Activated CD4-positive, alpha-beta memory T cell treated with anti-CD3 and anti-CD28 coated beads for 36 hours (primary cell): ENCODE measurements at regions of chr11 and their contacts with region 1.

Region 1: DNA sequence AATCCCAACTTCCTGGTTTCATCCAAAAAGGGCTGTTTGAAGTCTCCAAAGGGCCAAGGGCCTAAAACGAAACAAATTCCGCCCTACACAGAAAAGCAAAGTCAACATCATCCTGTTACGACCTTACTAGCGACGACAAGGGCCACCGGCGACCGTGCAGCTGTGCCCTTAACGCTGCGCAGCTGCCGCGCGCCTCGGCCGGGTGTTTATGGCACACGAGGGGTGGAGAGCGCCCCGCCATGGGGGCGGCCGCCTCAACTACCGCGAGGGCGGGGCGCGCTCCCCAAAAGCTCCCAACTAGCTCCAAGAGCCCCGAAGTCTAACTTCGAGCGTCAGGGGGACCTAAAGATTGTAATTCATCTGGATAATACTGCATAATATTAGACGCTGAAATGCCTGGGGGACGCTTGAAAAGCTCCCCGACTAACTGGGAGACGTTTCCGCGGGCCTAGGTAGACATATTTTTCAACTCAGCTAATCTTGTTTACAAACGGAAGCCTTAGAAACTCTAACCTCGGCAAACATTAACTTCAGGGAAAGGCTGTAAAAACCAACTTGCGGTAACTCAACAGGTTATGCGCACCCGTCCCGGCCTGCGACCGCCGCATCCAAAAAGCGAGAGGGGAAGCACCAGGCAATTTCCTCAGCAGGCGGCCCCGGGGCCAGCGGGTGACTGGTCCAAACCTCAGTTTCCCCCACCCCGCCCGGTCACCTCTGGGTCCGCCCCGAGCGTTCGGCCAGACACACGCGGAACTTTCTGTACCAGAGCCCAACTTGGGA is 694 bp downstream of the TMEM123 start:
- DNase-seq: peak; percentile 86
- H3K4me3 Mint-ChIP-seq: peak overlapping the region; percentile 84
- H3K27ac Mint-ChIP-seq: peak overlapping the region; percentile 96
- H3K4me1 Mint-ChIP-seq: peaks cover 75% of the 10 kb centered on the region
- H3K27me3 Mint-ChIP-seq: no peaks in the 10 kb centered on the region

Region 2: DNA sequence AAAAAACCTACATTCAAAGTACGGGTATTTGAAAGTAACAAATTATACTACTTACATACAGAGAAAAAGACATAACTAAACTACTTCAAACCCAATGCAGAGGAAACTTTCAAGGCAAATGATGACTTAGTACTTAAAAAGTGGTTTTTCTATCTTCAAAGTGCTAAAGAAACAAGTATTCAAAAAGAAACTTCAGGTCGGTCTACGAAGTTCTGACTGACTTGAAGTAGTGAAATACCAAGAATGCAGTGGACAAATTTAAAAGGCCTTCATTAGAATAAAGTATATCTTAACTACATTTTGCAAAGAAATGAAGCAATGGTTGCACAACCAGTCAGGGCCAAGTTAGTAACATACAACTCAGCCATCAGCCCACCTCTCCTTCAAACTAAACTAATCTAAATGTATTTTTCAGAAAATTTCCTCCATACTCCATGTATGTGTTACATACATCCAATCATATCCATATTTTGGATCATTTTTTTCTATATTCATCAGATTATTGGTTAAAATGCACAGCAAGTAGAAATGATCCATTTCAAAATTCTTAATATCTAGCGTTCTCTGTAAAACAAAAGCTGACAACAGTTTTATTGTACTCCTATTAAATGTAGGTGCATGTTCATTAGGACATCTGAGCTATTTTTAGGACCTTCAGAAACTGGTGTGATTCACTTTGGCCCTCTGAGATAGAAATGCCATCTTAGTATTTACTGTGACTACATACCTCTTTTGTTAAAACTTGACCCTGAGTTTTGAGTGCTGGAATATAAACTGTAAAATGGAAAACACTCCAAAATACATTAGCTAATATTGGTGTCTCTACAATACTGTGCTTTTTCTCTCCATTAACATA is 54.9 kb before region 1 on chr11:
- CTCF ChIA-PET with region 1: interaction called, 10 read pairs
- POLR2A ChIA-PET with region 1: no interaction called
- intact Hi-C with region 1: loop called (anchors 1 kb)
- DNase-seq: no peak
- H3K4me3 Mint-ChIP-seq: no peak overlapping the region
- H3K27ac Mint-ChIP-seq: peak overlapping the region; percentile 67
- H3K4me1 Mint-ChIP-seq: peaks cover 46% of the 10 kb centered on the region
- H3K27me3 Mint-ChIP-seq: no peaks in the 10 kb centered on the region

Region 3: GRCh38 chr11:102430158-102430836 is 21.6 kb before region 1 on chr11:
- CTCF ChIA-PET with region 1: interaction called, 6 read pairs
- POLR2A ChIA-PET with region 1: interaction called, 7 read pairs
- intact Hi-C with region 1: loop called (anchors 1 kb)
- DNase-seq: peak; percentile 74
- H3K4me3 Mint-ChIP-seq: peak overlapping the region; percentile 45
- H3K27ac Mint-ChIP-seq: peak overlapping the region; percentile 94
- H3K4me1 Mint-ChIP-seq: peaks cover 69% of the 10 kb centered on the region
- H3K27me3 Mint-ChIP-seq: no peaks in the 10 kb centered on the region

Region 4: GRCh38 chr11:102488208-102488607 is 36.3 kb after region 1 on chr11:
- CTCF ChIA-PET with region 1: no interaction called
- POLR2A ChIA-PET with region 1: no interaction called
- intact Hi-C with region 1: loop called (anchors 1 kb)
- DNase-seq: no peak
- H3K4me3 Mint-ChIP-seq: no peak overlapping the region
- H3K27ac Mint-ChIP-seq: peak overlapping the region; percentile 16
- H3K4me1 Mint-ChIP-seq: peaks cover 32% of the 10 kb centered on the region
- H3K27me3 Mint-ChIP-seq: no peaks in the 10 kb centered on the region